Activated B cell treated with CpG ODN at 0.5 μM for 24 hours (primary cell): ENCODE measurements at regions of chr14 and their contacts with region 1.

Region 1: GRCh38 chr14:34629657-34630529 is at the start of gene SNX6:
- DNase-seq: peak; percentile 77
- ATAC-seq: peak; percentile 98
- H3K4me3 Mint-ChIP-seq: peak within 1 kb of the TSS; percentile 97
- H3K27ac Mint-ChIP-seq: peak within 1 kb of the TSS; percentile 93
- H3K4me1 Mint-ChIP-seq: peaks cover 10% of the 10 kb centered on the region
- H3K27me3 Mint-ChIP-seq: peaks cover 3% of the 10 kb centered on the region
- CTCF ChIP-seq: no peak
- total RNA-seq, gene SNX6: 56.0 and 61.0 TPM in 2 replicates

Region 2: GRCh38 chr14:34461334-34462131 is 168.4 kb before region 1 on chr14:
- CTCF ChIA-PET with region 1: no interaction called
- POLR2A ChIA-PET with region 1: no interaction called
- intact Hi-C with region 1: loop called (anchors 2 kb)
- DNase-seq: no peak
- ATAC-seq: no peak
- H3K4me3 Mint-ChIP-seq: peak overlapping the region; percentile 88
- H3K27ac Mint-ChIP-seq: peak overlapping the region; percentile 76
- H3K4me1 Mint-ChIP-seq: peaks cover 15% of the 10 kb centered on the region
- H3K27me3 Mint-ChIP-seq: no peaks in the 10 kb centered on the region
- CTCF ChIP-seq: no peak

Region 3: GRCh38 chr14:34539407-34540180 is 90.3 kb before region 1 on chr14 and contains the start of gene EAPP:
- CTCF ChIA-PET with region 1: no interaction called
- POLR2A ChIA-PET with region 1: no interaction called
- intact Hi-C with region 1: loop called (anchors 5 kb)
- DNase-seq: peak; percentile 86
- ATAC-seq: peak; percentile 99
- H3K4me3 Mint-ChIP-seq: peak within 1 kb of the TSS; percentile 99
- H3K27ac Mint-ChIP-seq: peak within 1 kb of the TSS; percentile 97
- H3K4me1 Mint-ChIP-seq: peaks cover 34% of the 10 kb centered on the region
- H3K27me3 Mint-ChIP-seq: no peaks in the 10 kb centered on the region
- CTCF ChIP-seq: no peak
- total RNA-seq, gene EAPP: 40.7 and 43.2 TPM in 2 replicates

Region 4: DNA sequence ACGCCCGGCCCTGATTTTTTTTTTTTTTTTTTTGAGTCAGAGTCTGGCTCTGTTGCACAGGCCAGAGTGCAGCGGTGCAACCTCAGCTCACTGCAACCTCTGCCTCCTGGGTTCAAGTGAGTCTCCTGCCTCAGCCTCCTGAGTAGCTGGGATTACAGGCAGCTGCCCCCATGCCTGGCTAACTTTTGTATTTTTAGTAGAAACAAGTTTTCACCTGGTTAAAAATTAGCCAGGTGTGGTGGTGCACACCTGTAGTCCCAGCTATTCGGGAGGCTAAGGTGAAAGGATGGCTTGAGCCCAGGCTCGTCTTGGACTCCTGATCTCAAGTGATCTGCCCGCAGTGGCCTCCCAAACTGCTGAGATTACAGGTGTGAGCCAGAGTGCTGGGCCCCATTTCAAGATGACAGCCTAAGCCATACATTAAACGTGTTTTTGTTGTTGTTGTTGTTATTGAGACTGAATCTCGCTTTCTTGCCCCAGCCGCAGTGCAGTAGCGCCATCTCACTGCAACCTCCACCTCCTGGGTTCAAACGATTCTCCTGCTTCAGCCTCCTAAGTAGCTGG is 47.7 kb before region 1 on chr14:
- CTCF ChIA-PET with region 1: no interaction called
- POLR2A ChIA-PET with region 1: interaction called, 12 read pairs
- intact Hi-C with region 1: no loop called
- DNase-seq: no peak
- ATAC-seq: no peak
- H3K4me3 Mint-ChIP-seq: no peak overlapping the region
- H3K27ac Mint-ChIP-seq: no peak overlapping the region
- H3K4me1 Mint-ChIP-seq: no peaks in the 10 kb centered on the region
- H3K27me3 Mint-ChIP-seq: no peaks in the 10 kb centered on the region
- CTCF ChIP-seq: no peak

Region 5: GRCh38 chr14:34714320-34715126 is 84.6 kb after region 1 on chr14 and contains the start of gene CFL2:
- CTCF ChIA-PET with region 1: no interaction called
- POLR2A ChIA-PET with region 1: interaction called, 5 read pairs
- intact Hi-C with region 1: loop called (anchors 1 kb)
- DNase-seq: peak; percentile 80
- ATAC-seq: peak; percentile 90
- H3K4me3 Mint-ChIP-seq: peak within 1 kb of the TSS; percentile 92
- H3K27ac Mint-ChIP-seq: peak within 1 kb of the TSS; percentile 89
- H3K4me1 Mint-ChIP-seq: peaks cover 32% of the 10 kb centered on the region
- H3K27me3 Mint-ChIP-seq: no peaks in the 10 kb centered on the region
- CTCF ChIP-seq: no peak
- total RNA-seq, gene CFL2: 19.1 and 20.8 TPM in 2 replicates